ENCODE measurements at regions of chr5 and their contacts with region 1.

Region 1: GRCh38 chr5:126531543-126532120 is 63.4 kb downstream of the ALDH7A1 start:
- DNase-seq: no peak
- ATAC-seq: peak; percentile 74 to 85 (median 80)
- H3K4me3 ChIP-seq: no peak overlapping the region
- H3K27ac ChIP-seq: peak overlapping the region; percentile 5 to 65 (median 36)
- H3K4me1 ChIP-seq: peaks cover 0 to 16% (median 12%) of the 10 kb centered on the region in 9 donors
- H3K27me3 ChIP-seq: no peaks in the 10 kb centered on the region
- CTCF ChIP-seq: no peak

Region 2: GRCh38 chr5:126433701-126434100 is 97.9 kb before region 1 on chr5:
- intact Hi-C with region 1: no loop called
- DNase-seq: no peak
- ATAC-seq: no peak
- H3K4me3 ChIP-seq: no peak overlapping the region
- H3K27ac ChIP-seq: no peak overlapping the region
- H3K4me1 ChIP-seq: peaks cover 0 to 15% (median 9%) of the 10 kb centered on the region in 9 donors
- H3K27me3 ChIP-seq: no peaks in the 10 kb centered on the region
- CTCF ChIP-seq: no peak

Region 3: GRCh38 chr5:126483156-126483555 is 48.5 kb before region 1 on chr5:
- intact Hi-C with region 1: loop called in 2 of 10 experiments (anchors 10 kb)
- DNase-seq: no peak
- ATAC-seq: no peak
- H3K4me3 ChIP-seq: no peak overlapping the region
- H3K27ac ChIP-seq: peak overlapping the region in 1 of 10 donors; percentile 3
- H3K4me1 ChIP-seq: peaks cover 0 to 36% (median 5%) of the 10 kb centered on the region in 9 donors
- H3K27me3 ChIP-seq: no peaks in the 10 kb centered on the region
- CTCF ChIP-seq: no peak

Region 4: GRCh38 chr5:126587551-126588390 is 56.1 kb after region 1 on chr5:
- intact Hi-C with region 1: no loop called
- DNase-seq: no peak
- ATAC-seq: peak in 1 of 8 donors; percentile 31
- H3K4me3 ChIP-seq: no peak overlapping the region
- H3K27ac ChIP-seq: no peak overlapping the region
- H3K4me1 ChIP-seq: peaks cover 0 to 8% (median 0%) of the 10 kb centered on the region in 9 donors
- H3K27me3 ChIP-seq: no peaks in the 10 kb centered on the region
- CTCF ChIP-seq: no peak

Measured in heart right ventricle (tissue), 16 donors.